ENCODE measurements at regions of chr19 and their contacts with region 1.

Region 1: GRCh38 chr19:40662921-40663694 is 27.3 kb downstream of the NUMBL start:
- DNase-seq: peak; percentile 81 to 97 (median 93)

Region 2: DNA sequence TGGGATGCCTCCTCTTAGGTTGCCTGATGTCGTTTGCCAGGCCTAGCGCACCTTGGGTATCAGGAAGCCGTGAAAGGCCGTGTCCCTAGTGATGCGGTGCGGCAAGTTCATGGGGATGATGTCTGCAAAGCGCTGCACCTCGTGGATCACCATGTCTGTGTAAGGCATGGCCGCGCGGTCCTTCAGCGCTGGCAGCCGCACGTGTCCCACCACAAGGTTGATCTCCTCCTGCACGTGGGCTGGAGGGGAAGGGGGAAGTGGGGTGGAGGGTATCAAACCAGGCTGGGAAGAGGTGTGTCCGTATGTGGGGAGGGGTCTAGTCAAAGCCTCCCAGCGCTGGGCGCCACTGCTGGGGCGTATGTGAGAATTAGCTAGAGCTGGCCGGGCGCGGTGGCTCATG is 159.1 kb after region 1 on chr19:
- intact Hi-C with region 1: loop called (anchors 5 kb)
- DNase-seq: peak in 1 of 42 donors; percentile 17

Region 3: GRCh38 chr19:41144403-41144802 is 481.3 kb after region 1 on chr19:
- intact Hi-C with region 1: loop called (anchors 5 kb)
- DNase-seq: peak; percentile 54 to 90 (median 77)

Measured in head of caudate nucleus (tissue), 42 donors.